ENCODE measurements at regions of chr4 and their contacts with region 1.

Region 1: DNA sequence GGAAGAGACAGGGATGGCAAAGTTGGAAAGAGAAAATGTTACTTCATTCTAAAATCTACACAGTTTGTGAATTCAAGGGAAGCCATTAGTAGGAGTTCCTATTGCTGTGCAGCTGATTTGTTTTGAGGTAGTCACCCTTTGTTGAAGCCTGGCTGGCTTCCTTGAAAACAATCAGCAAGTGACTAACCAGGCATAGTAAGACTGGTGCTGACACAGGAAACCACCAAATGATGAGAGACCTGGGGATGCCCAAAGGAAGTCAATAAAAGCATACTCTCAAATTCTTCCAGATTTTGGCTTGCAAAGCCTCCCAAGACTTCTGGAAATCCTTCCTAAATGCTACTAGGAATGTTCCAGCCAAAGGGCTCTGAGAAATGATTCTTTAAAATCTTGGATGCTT is 23.9 kb upstream of the PRDM8 start:
- DNase-seq: no peak
- ATAC-seq: peak; percentile 91
- H3K4me3 Mint-ChIP-seq: peak overlapping the region; percentile 70
- H3K27ac Mint-ChIP-seq: peak overlapping the region; percentile 96
- H3K4me1 Mint-ChIP-seq: peaks cover 62% of the 10 kb centered on the region
- H3K27me3 Mint-ChIP-seq: no peaks in the 10 kb centered on the region
- CTCF ChIP-seq: no peak

Region 2: GRCh38 chr4:79917246-79917645 is 256.2 kb before region 1 on chr4:
- CTCF ChIA-PET with region 1: no interaction called
- POLR2A ChIA-PET with region 1: no interaction called
- intact Hi-C with region 1: no loop called
- DNase-seq: peak; percentile 25
- ATAC-seq: peak; percentile 68
- H3K4me3 Mint-ChIP-seq: no peak overlapping the region
- H3K27ac Mint-ChIP-seq: no peak overlapping the region
- H3K4me1 Mint-ChIP-seq: peaks cover 4% of the 10 kb centered on the region
- H3K27me3 Mint-ChIP-seq: no peaks in the 10 kb centered on the region
- CTCF ChIP-seq: no peak

Region 3: DNA sequence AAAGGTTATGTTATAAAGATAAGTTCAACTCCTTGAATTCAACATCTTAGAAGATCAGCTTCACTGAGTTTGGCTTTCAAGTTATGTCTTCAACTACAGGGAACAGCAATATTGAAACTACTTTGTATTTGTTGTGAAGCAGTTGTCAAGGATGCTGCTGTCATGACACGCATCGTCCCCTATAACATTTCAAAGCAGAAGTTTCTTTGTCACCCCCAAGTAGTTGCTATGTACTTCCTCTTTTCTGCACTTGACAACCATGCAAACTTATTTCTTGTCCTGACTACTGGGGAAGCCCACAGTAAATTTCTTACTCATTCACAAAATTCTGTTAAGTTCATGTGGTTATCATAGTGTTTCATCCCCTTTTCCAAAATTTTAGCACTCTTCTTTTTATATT is 114.7 kb before region 1 on chr4:
- CTCF ChIA-PET with region 1: no interaction called
- POLR2A ChIA-PET with region 1: no interaction called
- intact Hi-C with region 1: loop called (anchors 2 kb)
- DNase-seq: no peak
- ATAC-seq: peak; percentile 89
- H3K4me3 Mint-ChIP-seq: peak overlapping the region; percentile 79
- H3K27ac Mint-ChIP-seq: peak overlapping the region; percentile 99
- H3K4me1 Mint-ChIP-seq: peaks cover 30% of the 10 kb centered on the region
- H3K27me3 Mint-ChIP-seq: no peaks in the 10 kb centered on the region
- CTCF ChIP-seq: no peak

Region 4: GRCh38 chr4:80138551-80139538 is 34.6 kb before region 1 on chr4:
- CTCF ChIA-PET with region 1: interaction called, 3 read pairs
- POLR2A ChIA-PET with region 1: interaction called, 3 read pairs
- intact Hi-C with region 1: loop called (anchors 2 kb)
- DNase-seq: no peak
- ATAC-seq: peak; percentile 72
- H3K4me3 Mint-ChIP-seq: peak overlapping the region; percentile 21
- H3K27ac Mint-ChIP-seq: peak overlapping the region; percentile 46
- H3K4me1 Mint-ChIP-seq: peaks cover 33% of the 10 kb centered on the region
- H3K27me3 Mint-ChIP-seq: no peaks in the 10 kb centered on the region
- CTCF ChIP-seq: no peak

Region 5: DNA sequence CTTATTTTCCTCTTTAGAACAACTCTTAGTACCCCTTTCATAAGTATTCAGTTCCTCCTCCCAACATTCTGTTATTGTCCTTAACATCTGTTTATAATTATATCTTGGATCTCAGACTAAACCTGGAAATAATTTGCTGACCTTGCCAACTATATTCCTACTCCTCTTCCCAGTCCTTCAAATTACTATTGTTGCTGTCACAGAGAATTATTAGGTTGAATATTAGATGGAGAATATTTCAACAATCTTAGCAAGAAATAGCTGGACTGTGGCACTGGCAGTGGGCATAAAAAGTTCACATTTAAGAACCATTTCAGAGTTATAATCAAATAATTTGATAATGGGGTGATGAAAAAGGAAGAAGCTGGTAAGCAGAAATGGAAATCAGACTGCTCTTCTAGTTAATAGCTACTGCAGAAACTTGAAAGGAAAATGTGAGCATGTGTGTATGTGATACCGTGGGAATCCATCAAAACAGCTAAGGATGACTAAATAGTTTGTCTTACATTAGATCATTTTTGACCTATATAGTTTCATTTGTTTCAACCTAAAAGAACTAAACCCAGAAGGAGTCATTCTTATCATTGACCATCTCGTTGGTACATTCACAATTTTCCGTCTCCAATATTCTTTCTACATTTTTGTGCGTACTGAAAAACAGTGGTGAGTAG is 19.4 kb before region 1 on chr4:
- CTCF ChIA-PET with region 1: no interaction called
- POLR2A ChIA-PET with region 1: interaction called, 6 read pairs
- intact Hi-C with region 1: loop called (anchors 2 kb)
- DNase-seq: no peak
- ATAC-seq: no peak
- H3K4me3 Mint-ChIP-seq: no peak overlapping the region
- H3K27ac Mint-ChIP-seq: no peak overlapping the region
- H3K4me1 Mint-ChIP-seq: no peaks in the 10 kb centered on the region
- H3K27me3 Mint-ChIP-seq: no peaks in the 10 kb centered on the region
- CTCF ChIP-seq: no peak

Region 6: DNA sequence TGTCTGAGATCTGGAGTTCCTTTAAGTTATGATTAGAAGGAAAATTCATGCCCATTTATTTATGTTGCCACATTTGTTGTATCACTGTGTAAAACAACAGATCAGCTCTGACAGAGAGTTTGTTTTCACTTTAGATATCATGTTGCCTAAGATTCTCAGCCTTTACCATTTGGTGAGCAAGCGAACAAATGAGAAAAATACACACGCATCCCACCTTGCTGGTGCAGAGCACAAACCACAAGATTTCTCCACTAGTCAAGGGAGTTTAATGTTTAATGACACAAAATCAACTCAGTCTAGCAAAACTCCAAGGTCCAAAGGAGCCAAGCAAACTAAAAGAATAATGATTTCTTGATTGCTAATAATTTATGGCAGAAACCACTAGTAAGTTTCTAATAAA is 120.8 kb after region 1 on chr4:
- CTCF ChIA-PET with region 1: no interaction called
- POLR2A ChIA-PET with region 1: no interaction called
- intact Hi-C with region 1: no loop called
- DNase-seq: no peak
- ATAC-seq: no peak
- H3K4me3 Mint-ChIP-seq: no peak overlapping the region
- H3K27ac Mint-ChIP-seq: no peak overlapping the region
- H3K4me1 Mint-ChIP-seq: no peaks in the 10 kb centered on the region
- H3K27me3 Mint-ChIP-seq: peaks cover 14% of the 10 kb centered on the region
- CTCF ChIP-seq: no peak

Region 7: DNA sequence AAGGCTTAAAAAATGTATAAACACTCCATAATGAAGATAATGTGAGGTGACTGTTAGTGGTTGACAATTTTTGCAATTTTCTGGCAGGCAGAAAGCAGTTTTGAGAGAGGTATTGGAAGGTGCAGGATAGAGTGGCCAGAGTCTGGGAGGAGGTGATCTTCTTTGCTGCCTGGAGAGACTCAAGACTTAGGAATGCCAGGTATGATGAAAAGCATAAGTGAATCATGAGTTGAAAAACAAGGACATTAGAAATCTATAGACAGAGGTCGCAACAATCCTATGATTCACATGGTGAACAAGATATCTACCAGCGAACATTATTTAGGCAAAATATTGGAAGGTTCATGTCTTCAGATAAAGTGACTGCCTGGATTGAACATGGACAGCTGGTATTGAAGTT is 280.6 kb after region 1 on chr4:
- CTCF ChIA-PET with region 1: no interaction called
- POLR2A ChIA-PET with region 1: no interaction called
- intact Hi-C with region 1: no loop called
- DNase-seq: no peak
- ATAC-seq: no peak
- H3K4me3 Mint-ChIP-seq: no peak overlapping the region
- H3K27ac Mint-ChIP-seq: no peak overlapping the region
- H3K4me1 Mint-ChIP-seq: no peaks in the 10 kb centered on the region
- H3K27me3 Mint-ChIP-seq: no peaks in the 10 kb centered on the region
- CTCF ChIP-seq: no peak